H1 (cell line): ENCODE measurements at regions of chr10 and their contacts with region 1.

Region 1: DNA sequence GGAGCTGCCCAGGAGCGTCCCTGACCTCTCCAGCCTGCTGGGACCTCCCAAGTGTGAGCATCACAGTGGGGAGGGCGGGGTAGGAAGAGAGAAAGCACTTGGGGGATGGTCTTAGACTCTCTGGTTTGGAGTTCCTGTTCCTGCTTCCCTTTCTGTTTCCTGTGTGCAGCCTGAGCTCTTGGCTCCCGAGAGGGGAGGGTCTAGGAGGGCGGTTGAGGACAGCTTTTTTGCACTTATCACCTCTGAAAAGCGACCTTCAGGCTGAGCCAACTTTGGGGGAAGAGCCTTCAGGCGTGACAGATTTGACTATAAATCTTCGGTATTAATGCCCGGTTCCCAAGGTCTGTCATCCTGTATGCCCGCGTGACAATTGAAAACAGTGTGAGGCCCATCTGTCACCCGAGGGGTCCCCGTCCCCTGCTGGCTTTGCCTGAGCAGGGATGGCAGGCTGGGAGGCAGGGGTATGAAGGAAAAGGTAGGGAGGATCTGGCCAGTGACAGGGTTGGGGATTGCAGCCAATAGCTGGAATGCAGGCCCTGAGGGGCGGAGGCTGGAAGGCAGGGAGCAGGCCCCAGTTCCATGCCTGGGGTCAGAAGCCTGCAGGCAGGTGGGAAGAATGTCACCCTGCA is 78.6 kb downstream of the CDH23 start:
- DNase-seq: no peak
- H3K4me3 ChIP-seq: no peak overlapping the region
- H3K27ac ChIP-seq: no peak overlapping the region
- H3K4me1 ChIP-seq: peaks cover 0 to 14% (median 6%) of the 10 kb centered on the region in 4 experiments; a peak in 6 of 7 replicates
- H3K27me3 ChIP-seq: no peaks in the 10 kb centered on the region
- CTCF ChIP-seq: peak in 1 of 3 experiments; percentile 2; a peak in 1 of 4 replicates
- EP300 ChIP-seq: no peak
- POLR2A ChIP-seq: no peak; a peak in 1 of 3 replicates
- RAD21 ChIP-seq: no peak

Region 2: GRCh38 chr10:71351628-71352319 is 123.6 kb before region 1 on chr10:
- CTCF ChIA-PET with region 1: no interaction called
- POLR2A ChIA-PET with region 1: no interaction called
- DNase-seq: no peak
- H3K4me3 ChIP-seq: no peak overlapping the region
- H3K27ac ChIP-seq: no peak overlapping the region
- H3K4me1 ChIP-seq: peaks cover 0 to 16% (median 7%) of the 10 kb centered on the region in 4 experiments; a peak in 4 of 7 replicates
- H3K27me3 ChIP-seq: no peaks in the 10 kb centered on the region
- CTCF ChIP-seq: no peak
- EP300 ChIP-seq: no peak
- POLR2A ChIP-seq: no peak
- RAD21 ChIP-seq: no peak

Region 3: GRCh38 chr10:71383972-71384687 is 91.2 kb before region 1 on chr10:
- CTCF ChIA-PET with region 1: interaction called, 21 read pairs
- POLR2A ChIA-PET with region 1: no interaction called
- DNase-seq: peak; percentile 58 to 99
- H3K4me3 ChIP-seq: no peak overlapping the region
- H3K27ac ChIP-seq: no peak overlapping the region
- H3K4me1 ChIP-seq: no peaks in the 10 kb centered on the region
- H3K27me3 ChIP-seq: no peaks in the 10 kb centered on the region
- CTCF ChIP-seq: peak; percentile 93 to 96 (median 95)
- EP300 ChIP-seq: no peak
- POLR2A ChIP-seq: no peak
- RAD21 ChIP-seq: peak; percentile 91 to 92

Region 4: DNA sequence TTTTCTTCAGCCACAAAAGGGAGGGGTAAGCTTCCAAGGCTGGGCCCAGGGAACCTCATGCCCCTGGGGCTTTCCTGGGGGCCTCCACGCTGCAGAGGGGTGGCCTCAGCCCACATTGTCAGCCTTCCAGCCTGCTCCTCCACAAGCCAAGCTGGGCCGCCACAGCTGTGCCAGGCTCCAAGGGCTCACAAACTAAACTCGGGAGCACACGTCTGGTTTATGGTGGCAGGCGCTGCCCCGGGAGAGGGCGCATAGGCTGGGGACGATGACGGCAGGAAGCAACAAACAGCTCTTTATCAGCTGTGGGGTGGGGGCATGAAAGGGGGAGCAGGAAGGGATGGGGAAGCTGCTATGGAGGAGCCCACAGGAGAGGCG is 84.9 kb before region 1 on chr10:
- CTCF ChIA-PET with region 1: interaction called, 21 read pairs
- POLR2A ChIA-PET with region 1: no interaction called
- DNase-seq: no peak
- H3K4me3 ChIP-seq: no peak overlapping the region
- H3K27ac ChIP-seq: no peak overlapping the region
- H3K4me1 ChIP-seq: peaks cover 0 to 3% (median 0%) of the 10 kb centered on the region in 4 experiments; a peak in 1 of 7 replicates
- H3K27me3 ChIP-seq: peaks cover 0 to 12% (median 7%) of the 10 kb centered on the region in 4 experiments; a peak in 4 of 7 replicates
- CTCF ChIP-seq: no peak
- EP300 ChIP-seq: no peak
- POLR2A ChIP-seq: no peak
- RAD21 ChIP-seq: no peak

Region 5: GRCh38 chr10:71431239-71432100 is 43.9 kb before region 1 on chr10:
- CTCF ChIA-PET with region 1: interaction called, 25 read pairs
- POLR2A ChIA-PET with region 1: no interaction called
- DNase-seq: peak in 1 of 2 experiments; percentile 58
- H3K4me3 ChIP-seq: no peak overlapping the region
- H3K27ac ChIP-seq: no peak overlapping the region
- H3K4me1 ChIP-seq: peaks cover 0 to 2% (median 0%) of the 10 kb centered on the region in 4 experiments; a peak in 2 of 7 replicates
- H3K27me3 ChIP-seq: no peaks in the 10 kb centered on the region
- CTCF ChIP-seq: peak; percentile 36 to 62 (median 54)
- EP300 ChIP-seq: no peak
- POLR2A ChIP-seq: no peak
- RAD21 ChIP-seq: peak in 1 of 2 experiments; percentile 38; a peak in 2 of 4 replicates

Region 6: DNA sequence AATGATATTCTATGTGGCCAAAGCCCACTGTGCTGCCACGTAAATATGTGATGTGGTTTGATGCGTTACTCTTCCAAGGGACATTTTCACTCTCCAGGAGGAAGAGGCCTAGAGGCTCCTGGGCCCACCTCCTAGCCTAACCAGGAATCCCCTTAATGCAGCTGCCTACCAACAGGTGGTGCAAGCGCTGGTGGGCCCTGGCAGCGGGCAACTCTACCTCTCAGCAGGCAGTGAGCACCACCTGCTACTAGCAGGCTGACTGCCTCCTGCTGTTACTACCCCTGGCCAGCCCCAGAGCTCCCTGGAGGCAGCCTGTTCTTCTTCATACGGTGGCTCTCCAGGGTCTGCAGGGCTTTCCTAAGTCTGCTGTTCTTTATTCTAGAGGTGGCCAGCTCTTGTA is 15.8 kb before region 1 on chr10:
- CTCF ChIA-PET with region 1: interaction called, 30 read pairs
- POLR2A ChIA-PET with region 1: interaction called, 3 read pairs
- DNase-seq: no peak
- H3K4me3 ChIP-seq: no peak overlapping the region
- H3K27ac ChIP-seq: no peak overlapping the region
- H3K4me1 ChIP-seq: no peaks in the 10 kb centered on the region
- H3K27me3 ChIP-seq: no peaks in the 10 kb centered on the region
- CTCF ChIP-seq: peak; percentile 38 to 62 (median 40)
- EP300 ChIP-seq: no peak
- POLR2A ChIP-seq: no peak
- RAD21 ChIP-seq: peak; percentile 27 to 45; a peak in 3 of 4 replicates

Region 7: GRCh38 chr10:71486484-71487114 is 11.2 kb after region 1 on chr10:
- CTCF ChIA-PET with region 1: interaction called, 34 read pairs
- POLR2A ChIA-PET with region 1: interaction called, 3 read pairs
- DNase-seq: peak in 1 of 2 experiments; percentile 93
- H3K4me3 ChIP-seq: no peak overlapping the region
- H3K27ac ChIP-seq: no peak overlapping the region
- H3K4me1 ChIP-seq: peaks cover 0 to 6% (median 1%) of the 10 kb centered on the region in 4 experiments; a peak in 3 of 7 replicates
- H3K27me3 ChIP-seq: no peaks in the 10 kb centered on the region
- CTCF ChIP-seq: peak; percentile 92 to 99 (median 96)
- EP300 ChIP-seq: no peak
- POLR2A ChIP-seq: no peak
- RAD21 ChIP-seq: peak; percentile 92 to 94

Region 8: DNA sequence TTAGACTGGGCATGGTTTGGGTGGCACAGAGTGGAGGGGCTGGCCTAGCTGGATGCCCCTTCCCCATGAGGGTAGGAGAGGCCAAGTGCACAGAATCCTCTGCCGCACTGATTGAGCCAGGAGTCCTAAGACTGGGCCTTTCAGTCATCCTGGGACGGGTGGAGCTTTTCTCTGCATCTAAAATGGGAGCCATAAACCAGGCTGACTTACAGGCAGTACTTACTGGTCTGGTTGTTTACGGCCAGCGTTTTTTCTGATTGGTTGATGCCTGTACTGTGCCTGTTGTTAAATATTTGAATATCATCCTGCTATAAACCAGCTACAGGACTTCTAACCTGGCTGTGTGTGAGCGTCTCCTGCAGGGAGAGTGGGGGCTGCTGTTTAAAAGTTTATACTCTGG is 29.2 kb after region 1 on chr10:
- CTCF ChIA-PET with region 1: no interaction called
- POLR2A ChIA-PET with region 1: no interaction called
- DNase-seq: no peak
- H3K4me3 ChIP-seq: no peak overlapping the region
- H3K27ac ChIP-seq: no peak overlapping the region
- H3K4me1 ChIP-seq: peaks cover 0 to 10% (median 4%) of the 10 kb centered on the region in 4 experiments; a peak in 4 of 7 replicates
- H3K27me3 ChIP-seq: no peaks in the 10 kb centered on the region; a peak in 1 of 7 replicates
- CTCF ChIP-seq: no peak
- EP300 ChIP-seq: no peak
- POLR2A ChIP-seq: no peak
- RAD21 ChIP-seq: no peak